ENCODE measurements at regions of chr4 and their contacts with region 1.

Region 1: DNA sequence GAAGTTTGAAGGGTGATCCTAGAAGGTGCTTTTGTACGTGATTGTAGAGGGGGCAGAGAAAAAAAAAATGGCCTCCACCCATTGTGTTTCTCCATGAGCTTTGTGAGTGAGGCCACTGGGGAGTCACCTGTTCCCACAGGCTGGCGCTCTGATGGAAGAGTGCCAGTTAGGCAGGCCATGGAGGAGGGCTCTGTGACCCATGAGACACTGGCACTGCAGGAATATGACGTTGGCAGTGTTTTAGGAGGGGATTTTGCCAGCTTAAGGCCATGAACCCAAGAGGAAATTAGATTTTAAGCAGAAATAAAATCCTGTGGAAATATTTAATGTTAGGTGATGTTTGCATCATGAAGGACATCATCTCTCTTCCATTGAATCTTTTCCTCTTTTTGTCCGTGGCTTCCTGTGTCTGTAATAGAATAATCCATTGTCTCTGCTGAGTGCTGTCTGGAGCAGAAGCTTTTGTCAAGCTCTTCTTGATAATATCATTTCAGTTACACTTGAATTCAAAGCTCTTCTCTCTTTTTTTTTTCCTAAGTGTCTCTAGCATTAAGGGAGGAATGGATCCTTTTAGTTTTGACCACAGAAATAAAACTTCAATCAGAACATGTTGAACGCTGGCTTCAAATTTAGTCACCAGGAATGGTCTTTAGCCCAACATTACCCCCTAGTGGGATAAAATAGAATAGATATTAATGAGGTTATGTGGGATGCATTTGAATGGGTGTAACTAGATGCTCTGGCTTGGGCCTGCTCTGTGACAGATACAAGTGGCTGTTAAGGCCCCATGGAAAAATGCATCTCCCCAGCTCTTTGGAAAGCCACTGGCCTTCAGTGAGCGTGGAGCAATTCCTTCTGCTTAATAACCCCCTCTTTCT is 41.0 kb upstream of the UCP1 start:
- DNase-seq: no peak
- H3K4me3 ChIP-seq: no peak overlapping the region
- H3K27ac ChIP-seq: no peak overlapping the region
- H3K4me1 ChIP-seq: no peaks in the 10 kb centered on the region; the same call in 1 of the 2 replicates
- H3K27me3 ChIP-seq: no peaks in the 10 kb centered on the region
- CTCF ChIP-seq: peak; percentile 68

Region 2: GRCh38 chr4:139656614-139657486 is 952.9 kb before region 1 on chr4:
- CTCF ChIA-PET with region 1: no interaction called
- POLR2A ChIA-PET with region 1: no interaction called
- intact Hi-C with region 1: loop called (anchors 1 kb)
- DNase-seq: peak in 1 of 2 experiments; percentile 53
- H3K4me3 ChIP-seq: no peak overlapping the region
- H3K27ac ChIP-seq: no peak overlapping the region
- H3K4me1 ChIP-seq: peaks cover 19% of the 10 kb centered on the region
- H3K27me3 ChIP-seq: no peaks in the 10 kb centered on the region
- CTCF ChIP-seq: peak; percentile 85

Region 3: DNA sequence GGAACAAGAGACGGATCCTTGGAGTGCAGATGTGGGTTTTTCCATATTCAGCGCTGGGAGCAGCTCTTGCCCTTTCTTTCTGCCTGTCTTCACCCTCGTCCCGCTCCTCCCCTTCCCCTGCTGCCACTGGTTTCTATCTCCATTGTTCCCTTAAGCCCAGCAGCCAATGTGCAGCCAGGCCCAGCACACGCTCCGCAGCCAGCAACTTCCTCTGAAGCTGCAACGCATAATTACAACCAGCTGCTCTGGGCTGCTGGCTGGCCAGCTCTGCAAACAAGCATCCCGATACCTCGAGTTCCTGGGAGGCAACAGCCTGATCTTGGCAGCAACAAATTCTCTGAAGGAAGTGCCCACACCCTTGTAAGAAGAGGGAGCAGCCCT is 372.2 kb before region 1 on chr4:
- CTCF ChIA-PET with region 1: no interaction called
- POLR2A ChIA-PET with region 1: no interaction called
- intact Hi-C with region 1: no loop called
- DNase-seq: no peak
- H3K4me3 ChIP-seq: no peak overlapping the region
- H3K27ac ChIP-seq: no peak overlapping the region
- H3K4me1 ChIP-seq: no peaks in the 10 kb centered on the region
- H3K27me3 ChIP-seq: no peaks in the 10 kb centered on the region
- CTCF ChIP-seq: no peak

Region 4: DNA sequence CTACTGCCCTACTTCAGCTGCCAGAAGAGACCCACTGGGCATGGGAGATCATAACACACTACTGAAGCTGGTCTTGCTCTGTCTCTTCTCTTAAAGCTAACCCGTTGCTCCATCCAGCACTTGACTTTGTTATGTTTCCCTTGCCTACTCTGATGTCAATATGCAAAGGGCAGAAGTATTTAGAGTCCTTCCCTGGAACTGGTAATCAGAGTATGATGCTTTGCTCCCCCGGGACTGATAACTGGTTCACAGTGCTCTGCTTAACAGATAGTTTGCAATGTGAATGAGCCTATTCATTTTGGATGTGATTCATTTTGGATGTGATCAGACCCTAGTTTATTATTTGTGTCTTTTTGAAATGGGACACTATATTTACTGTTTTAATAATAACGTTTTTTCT is 28.7 kb before region 1 on chr4:
- CTCF ChIA-PET with region 1: no interaction called
- POLR2A ChIA-PET with region 1: interaction called, 19 read pairs
- intact Hi-C with region 1: no loop called
- DNase-seq: no peak
- H3K4me3 ChIP-seq: no peak overlapping the region
- H3K27ac ChIP-seq: no peak overlapping the region
- H3K4me1 ChIP-seq: no peaks in the 10 kb centered on the region
- H3K27me3 ChIP-seq: no peaks in the 10 kb centered on the region
- CTCF ChIP-seq: no peak